Mammary epithelial cell (primary cell): ENCODE measurements at regions of chr1 and their contacts with region 1.

Region 1: GRCh38 chr1:8671306-8671917 is 146.0 kb downstream of the RERE start:
- DNase-seq: no peak
- H3K4me3 ChIP-seq: no peak overlapping the region
- H3K27ac ChIP-seq: no peak overlapping the region
- H3K4me1 ChIP-seq: peaks cover 18% of the 10 kb centered on the region
- H3K27me3 ChIP-seq: no peaks in the 10 kb centered on the region
- CTCF ChIP-seq: peak; percentile 77 to 81

Region 2: GRCh38 chr1:8423650-8424538 is 247.5 kb before region 1 on chr1:
- CTCF ChIA-PET with region 1: no interaction called
- dilution Hi-C with region 1: no loop called
- in situ Hi-C with region 1: no loop called
- intact Hi-C with region 1: loop called (anchors 5 kb)
- DNase-seq: peak; percentile 51
- H3K4me3 ChIP-seq: peak overlapping the region; percentile 71 to 88 (median 77)
- H3K27ac ChIP-seq: peak overlapping the region; percentile 79
- H3K4me1 ChIP-seq: peaks cover 14% of the 10 kb centered on the region
- H3K27me3 ChIP-seq: no peaks in the 10 kb centered on the region
- CTCF ChIP-seq: no peak

Region 3: GRCh38 chr1:8752921-8753713 is 81.7 kb after region 1 on chr1:
- CTCF ChIA-PET with region 1: no interaction called
- dilution Hi-C with region 1: no loop called
- in situ Hi-C with region 1: no loop called
- intact Hi-C with region 1: no loop called
- DNase-seq: no peak
- H3K4me3 ChIP-seq: no peak overlapping the region
- H3K27ac ChIP-seq: no peak overlapping the region
- H3K4me1 ChIP-seq: no peaks in the 10 kb centered on the region
- H3K27me3 ChIP-seq: no peaks in the 10 kb centered on the region
- CTCF ChIP-seq: no peak

Region 4: DNA sequence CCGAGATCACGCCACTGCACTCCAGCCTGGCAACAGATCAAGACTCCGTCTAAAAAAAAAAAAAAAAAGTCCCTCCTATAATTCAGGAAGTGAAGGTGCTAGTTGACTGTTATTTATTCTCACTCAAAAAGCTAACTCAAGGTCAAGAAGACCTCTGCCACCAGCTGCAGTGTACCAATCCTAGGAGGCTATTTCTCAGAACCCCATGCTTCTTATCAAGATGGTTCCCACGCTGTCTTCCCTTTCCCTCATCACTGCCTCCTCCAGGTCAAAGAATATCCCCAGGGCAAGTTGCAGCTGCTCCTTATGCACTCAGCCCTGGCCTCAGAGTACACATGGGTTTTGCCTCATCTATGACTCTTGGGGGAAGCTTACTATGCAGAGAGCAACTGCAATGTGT is 92.5 kb after region 1 on chr1:
- CTCF ChIA-PET with region 1: no interaction called
- dilution Hi-C with region 1: no loop called
- in situ Hi-C with region 1: no loop called
- intact Hi-C with region 1: no loop called
- DNase-seq: no peak
- H3K4me3 ChIP-seq: no peak overlapping the region
- H3K27ac ChIP-seq: no peak overlapping the region
- H3K4me1 ChIP-seq: no peaks in the 10 kb centered on the region
- H3K27me3 ChIP-seq: no peaks in the 10 kb centered on the region
- CTCF ChIP-seq: no peak

Region 5: DNA sequence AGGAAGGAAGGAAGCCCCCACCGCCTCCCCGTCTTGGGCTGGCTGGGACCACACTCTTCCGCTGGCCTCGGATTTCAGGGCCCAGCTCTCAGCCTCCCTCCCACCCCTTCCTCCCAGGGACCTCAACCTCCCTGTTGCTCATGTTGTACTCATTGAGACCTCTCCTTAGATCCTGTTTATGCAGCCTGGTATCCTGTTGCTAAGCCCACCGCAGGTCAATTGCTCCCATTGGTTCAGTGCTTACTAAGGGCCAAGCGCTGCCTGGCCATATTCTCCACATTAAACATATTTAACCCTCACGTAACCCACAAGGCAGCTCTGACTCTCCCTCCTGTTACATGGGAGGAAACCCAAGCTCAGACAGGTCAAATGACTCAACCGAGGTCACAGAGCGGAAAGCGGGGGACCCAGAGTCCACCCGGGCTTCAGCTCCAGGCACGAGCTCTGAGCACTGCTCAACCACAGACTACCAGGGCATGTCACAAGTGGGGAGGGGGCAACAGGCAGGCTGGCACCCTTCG is 539.9 kb after region 1 on chr1:
- CTCF ChIA-PET with region 1: no interaction called
- dilution Hi-C with region 1: no loop called
- in situ Hi-C with region 1: no loop called
- intact Hi-C with region 1: no loop called
- DNase-seq: no peak
- H3K4me3 ChIP-seq: no peak overlapping the region
- H3K27ac ChIP-seq: no peak overlapping the region
- H3K4me1 ChIP-seq: no peaks in the 10 kb centered on the region
- H3K27me3 ChIP-seq: no peaks in the 10 kb centered on the region
- CTCF ChIP-seq: no peak